ENCODE measurements at regions of chr5 and their contacts with region 1.

Region 1: GRCh38 chr5:133081703-133082102 is 29.9 kb downstream of the HSPA4 start:
- DNase-seq: no peak
- H3K4me3 Mint-ChIP-seq: no peak overlapping the region
- H3K27ac Mint-ChIP-seq: no peak overlapping the region
- H3K4me1 Mint-ChIP-seq: peaks cover 5% of the 10 kb centered on the region
- H3K27me3 Mint-ChIP-seq: no peaks in the 10 kb centered on the region
- CTCF ChIP-seq: no peak

Region 2: DNA sequence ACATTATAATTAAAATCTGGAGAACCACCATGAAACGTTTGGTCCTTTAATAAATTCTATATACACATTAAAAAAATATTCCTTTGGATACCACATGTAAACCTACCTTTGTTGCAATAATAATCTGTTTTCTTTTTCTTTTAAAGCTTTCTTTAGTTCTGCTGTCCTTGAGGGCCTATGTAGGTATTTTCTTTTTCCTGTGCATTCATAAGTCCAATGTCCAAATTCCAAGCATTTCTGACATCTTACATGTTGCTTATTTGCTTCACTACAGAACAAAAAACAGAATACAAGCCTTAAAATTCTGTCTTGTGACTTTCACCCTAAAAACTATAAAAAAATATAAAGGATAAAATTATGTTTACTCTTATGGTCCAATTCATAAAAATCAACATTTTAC is 75.0 kb before region 1 on chr5:
- CTCF ChIA-PET with region 1: interaction called, 11 read pairs
- intact Hi-C with region 1: no loop called
- DNase-seq: no peak
- H3K4me3 Mint-ChIP-seq: no peak overlapping the region
- H3K27ac Mint-ChIP-seq: peak overlapping the region; percentile 27
- H3K4me1 Mint-ChIP-seq: peaks cover 18% of the 10 kb centered on the region
- H3K27me3 Mint-ChIP-seq: no peaks in the 10 kb centered on the region
- CTCF ChIP-seq: no peak